ENCODE measurements at regions of chr3 and their contacts with region 1.

Region 1: DNA sequence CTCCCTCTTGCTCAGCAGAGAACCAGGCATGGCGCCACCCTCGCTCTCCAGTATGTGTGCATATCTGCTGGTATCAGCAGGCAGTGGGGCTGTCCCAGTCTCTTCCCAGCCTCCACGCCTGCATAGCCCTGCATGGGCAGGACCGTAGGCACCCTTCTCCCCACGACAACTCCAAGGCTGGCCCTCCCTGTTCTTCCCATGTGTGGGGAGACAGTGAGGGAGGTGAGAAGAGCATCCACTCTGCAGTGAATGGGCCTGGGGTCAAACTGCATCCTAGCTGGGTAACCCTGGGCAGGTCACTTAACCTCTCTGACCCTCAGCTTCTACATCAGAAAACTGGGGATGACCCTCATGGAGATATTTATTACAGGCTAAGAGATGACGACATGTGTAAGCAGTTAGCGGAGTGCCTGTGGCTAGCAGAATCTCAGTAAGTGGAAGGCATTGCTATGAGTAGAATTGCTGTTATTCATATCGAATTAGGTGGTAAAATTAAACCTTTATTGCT is 13.3 kb upstream of the SSUH2 start:
- DNase-seq: no peak
- H3K4me3 ChIP-seq: no peak overlapping the region
- H3K27ac ChIP-seq: peak overlapping the region; percentile 76 to 87
- H3K4me1 ChIP-seq: peaks cover 23 to 48% of the 10 kb centered on the region in 2 donors
- H3K27me3 ChIP-seq: no peaks in the 10 kb centered on the region
- CTCF ChIP-seq: no peak

Region 2: DNA sequence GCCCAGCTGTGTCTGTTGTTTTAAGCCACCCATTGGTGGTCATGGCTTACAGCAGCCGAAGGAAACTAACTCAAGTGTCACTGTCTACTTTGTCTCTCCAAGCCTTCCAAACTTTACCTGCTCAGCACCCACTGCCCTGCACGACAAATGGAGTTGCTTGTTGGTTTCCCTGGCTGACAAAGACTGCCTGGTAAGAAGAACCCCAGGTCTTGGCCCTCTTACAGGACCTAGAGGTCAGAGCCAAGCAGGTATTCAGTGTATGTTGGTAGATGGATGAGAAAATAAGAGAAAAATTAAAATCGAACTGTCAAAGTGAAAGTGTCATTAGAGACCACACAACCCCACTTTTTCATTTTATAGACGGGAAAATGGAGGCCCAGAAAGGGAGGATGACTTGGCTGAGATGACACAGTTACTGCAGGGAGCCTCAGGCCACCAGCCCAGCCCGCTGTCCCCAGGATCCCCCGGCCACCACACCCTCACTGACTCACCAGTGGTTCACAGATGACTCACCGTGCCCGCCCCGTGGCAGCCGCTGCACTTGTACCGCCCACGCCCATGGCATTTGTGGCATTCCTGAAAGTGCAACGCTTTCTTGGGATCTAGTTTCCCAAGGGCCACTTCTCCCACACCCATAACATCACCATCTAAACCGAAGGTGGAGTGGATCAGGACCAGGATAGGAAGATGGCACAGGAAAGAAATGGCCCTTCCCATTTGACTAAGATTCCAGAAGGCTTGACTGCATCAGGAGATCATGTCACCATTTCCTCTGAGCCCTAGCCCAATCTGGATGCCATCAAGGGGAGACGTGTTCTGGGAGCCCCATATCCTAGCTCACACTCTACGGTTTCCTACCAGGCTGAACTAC is 28.5 kb before region 1 on chr3:
- intact Hi-C with region 1: loop called (anchors 2 kb)
- DNase-seq: peak; percentile 38 to 92
- H3K4me3 ChIP-seq: no peak overlapping the region
- H3K27ac ChIP-seq: no peak overlapping the region
- H3K4me1 ChIP-seq: peaks cover 0 to 3% of the 10 kb centered on the region in 2 donors
- H3K27me3 ChIP-seq: no peaks in the 10 kb centered on the region
- CTCF ChIP-seq: no peak

Region 3: GRCh38 chr3:8678751-8679150 is 20.9 kb after region 1 on chr3:
- intact Hi-C with region 1: no loop called
- DNase-seq: no peak
- H3K4me3 ChIP-seq: no peak overlapping the region
- H3K27ac ChIP-seq: no peak overlapping the region
- H3K4me1 ChIP-seq: no peaks in the 10 kb centered on the region
- H3K27me3 ChIP-seq: no peaks in the 10 kb centered on the region
- CTCF ChIP-seq: no peak

Measured in ascending aorta (tissue), 2 donors.